A673 (cell line): ENCODE measurements at regions of chr2 and their contacts with region 1.

Region 1: GRCh38 chr2:219368690-219369195 is 19.0 kb downstream of the DNPEP start:
- DNase-seq: no peak
- H3K4me3 ChIP-seq: no peak overlapping the region
- H3K27ac ChIP-seq: no peak overlapping the region
- H3K4me1 ChIP-seq: no peaks in the 10 kb centered on the region
- H3K27me3 ChIP-seq: no peaks in the 10 kb centered on the region
- CTCF ChIP-seq: no peak

Region 2: GRCh38 chr2:219388127-219388844 is 19.5 kb after region 1 on chr2:
- CTCF ChIA-PET with region 1: interaction called, 10 read pairs
- POLR2A ChIA-PET with region 1: no interaction called
- intact Hi-C with region 1: no loop called
- DNase-seq: peak; percentile 96
- H3K4me3 ChIP-seq: peak overlapping the region; percentile 27
- H3K27ac ChIP-seq: peak overlapping the region; percentile 41
- H3K4me1 ChIP-seq: no peaks in the 10 kb centered on the region
- H3K27me3 ChIP-seq: no peaks in the 10 kb centered on the region
- CTCF ChIP-seq: peak; percentile 59